GM12878 (cell line): ENCODE measurements at regions of chr12 and their contacts with region 1.

Region 1: GRCh38 chr12:40158592-40159111 is 52.8 kb upstream of the SLC2A13 start:
- DNase-seq: no peak
- ATAC-seq: peak; percentile 84
- H3K4me3 ChIP-seq: no peak overlapping the region
- H3K27ac ChIP-seq: peak overlapping the region; percentile 53; the same call in 1 of the 2 replicates
- H3K4me1 ChIP-seq: peaks cover 10% of the 10 kb centered on the region
- H3K27me3 ChIP-seq: no peaks in the 10 kb centered on the region
- CTCF ChIP-seq: no peak
- EP300 ChIP-seq: no peak
- POLR2A ChIP-seq: no peak
- RAD21 ChIP-seq: no peak

Region 2: DNA sequence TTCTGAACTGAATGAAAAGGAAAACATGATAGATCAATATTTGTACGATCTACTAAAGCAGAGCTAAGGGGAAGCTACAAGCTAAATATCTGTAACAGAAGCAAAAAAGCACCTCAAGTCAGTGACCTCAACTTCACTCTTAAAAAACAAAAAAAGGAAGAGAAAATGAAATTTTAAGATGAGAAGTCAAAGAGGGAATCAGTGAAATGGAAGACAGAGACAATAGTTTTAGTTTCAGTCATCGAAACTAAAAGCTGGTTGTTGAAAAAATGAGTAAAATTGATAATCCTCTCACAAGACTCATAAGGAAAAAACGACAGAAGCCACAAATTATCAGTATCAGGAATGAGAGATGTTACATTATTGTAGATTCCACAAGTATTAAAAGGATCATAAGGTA is 40.8 kb before region 1 on chr12:
- CTCF ChIA-PET with region 1: interaction called, 3 read pairs
- POLR2A ChIA-PET with region 1: interaction called, 3 read pairs
- RAD21 ChIA-PET with region 1: interaction called, 10 read pairs
- SMC1A ChIA-PET with region 1: interaction called, 6 read pairs
- in situ Hi-C with region 1: no loop called
- intact Hi-C with region 1: no loop called
- DNase-seq: peak; percentile 51
- ATAC-seq: peak; percentile 94
- H3K4me3 ChIP-seq: no peak overlapping the region
- H3K27ac ChIP-seq: no peak overlapping the region
- H3K4me1 ChIP-seq: peaks cover 3% of the 10 kb centered on the region; the same call in 1 of the 2 replicates
- H3K27me3 ChIP-seq: no peaks in the 10 kb centered on the region; a peak in 1 of 4 replicates
- CTCF ChIP-seq: no peak
- EP300 ChIP-seq: peak; percentile 44 to 59; a peak in 2 of 4 replicates
- POLR2A ChIP-seq: no peak
- RAD21 ChIP-seq: no peak

Region 3: DNA sequence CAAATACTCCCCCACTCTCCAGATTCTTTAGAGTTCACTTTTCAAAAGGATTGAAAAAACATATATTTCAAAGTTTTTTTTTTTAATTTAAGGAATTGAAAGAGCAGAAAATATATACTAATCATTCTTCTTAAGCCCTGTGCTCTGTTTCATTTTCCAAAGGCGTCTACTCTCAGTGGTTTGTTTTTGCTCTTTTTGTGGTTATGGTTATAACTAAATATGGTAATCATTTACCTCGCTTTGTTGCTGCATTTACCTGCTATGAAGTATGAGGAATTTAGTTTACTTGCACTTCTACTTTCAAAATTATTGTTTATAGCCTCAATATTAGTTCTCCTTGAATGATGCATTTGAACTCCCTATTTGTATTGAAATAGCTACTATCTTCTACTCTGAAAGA is 10.2 kb after region 1 on chr12:
- CTCF ChIA-PET with region 1: interaction called, 10 read pairs
- POLR2A ChIA-PET with region 1: no interaction called
- RAD21 ChIA-PET with region 1: interaction called, 13 read pairs
- SMC1A ChIA-PET with region 1: interaction called, 18 read pairs
- in situ Hi-C with region 1: no loop called
- intact Hi-C with region 1: no loop called
- DNase-seq: peak; percentile 55
- ATAC-seq: peak; percentile 94
- H3K4me3 ChIP-seq: 0 out of 2 replicates have a peak overlapping the region, but pooled peaks have one; percentile 9
- H3K27ac ChIP-seq: peak overlapping the region; percentile 56; the same call in 1 of the 2 replicates
- H3K4me1 ChIP-seq: peaks cover 10% of the 10 kb centered on the region
- H3K27me3 ChIP-seq: peaks cover 0 to 2% of the 10 kb centered on the region in 2 experiments; a peak in 1 of 4 replicates
- CTCF ChIP-seq: no peak
- EP300 ChIP-seq: peak; percentile 66 to 91
- POLR2A ChIP-seq: no peak
- RAD21 ChIP-seq: no peak

Region 4: GRCh38 chr12:40202095-40203059 is 43.7 kb after region 1 on chr12:
- CTCF ChIA-PET with region 1: interaction called, 3 read pairs
- POLR2A ChIA-PET with region 1: no interaction called
- RAD21 ChIA-PET with region 1: interaction called, 13 read pairs
- SMC1A ChIA-PET with region 1: interaction called, 42 read pairs
- in situ Hi-C with region 1: no loop called
- intact Hi-C with region 1: no loop called
- DNase-seq: no peak
- ATAC-seq: peak; percentile 79
- H3K4me3 ChIP-seq: no peak overlapping the region
- H3K27ac ChIP-seq: no peak overlapping the region
- H3K4me1 ChIP-seq: no peaks in the 10 kb centered on the region
- H3K27me3 ChIP-seq: no peaks in the 10 kb centered on the region
- CTCF ChIP-seq: no peak
- EP300 ChIP-seq: peak in 1 of 2 experiments; percentile 44; a peak in 1 of 4 replicates
- POLR2A ChIP-seq: no peak
- RAD21 ChIP-seq: no peak

Region 5: GRCh38 chr12:40208707-40209446 is 50.2 kb after region 1 on chr12:
- CTCF ChIA-PET with region 1: interaction called, 6 read pairs
- POLR2A ChIA-PET with region 1: interaction called, 8 read pairs
- RAD21 ChIA-PET with region 1: interaction called, 11 read pairs
- SMC1A ChIA-PET with region 1: interaction called, 42 read pairs
- in situ Hi-C with region 1: no loop called
- intact Hi-C with region 1: no loop called
- DNase-seq: no peak
- ATAC-seq: peak; percentile 94
- H3K4me3 ChIP-seq: no peak overlapping the region
- H3K27ac ChIP-seq: no peak overlapping the region
- H3K4me1 ChIP-seq: peaks cover 8% of the 10 kb centered on the region
- H3K27me3 ChIP-seq: no peaks in the 10 kb centered on the region
- CTCF ChIP-seq: no peak
- EP300 ChIP-seq: no peak
- POLR2A ChIP-seq: no peak
- RAD21 ChIP-seq: no peak

Region 6: DNA sequence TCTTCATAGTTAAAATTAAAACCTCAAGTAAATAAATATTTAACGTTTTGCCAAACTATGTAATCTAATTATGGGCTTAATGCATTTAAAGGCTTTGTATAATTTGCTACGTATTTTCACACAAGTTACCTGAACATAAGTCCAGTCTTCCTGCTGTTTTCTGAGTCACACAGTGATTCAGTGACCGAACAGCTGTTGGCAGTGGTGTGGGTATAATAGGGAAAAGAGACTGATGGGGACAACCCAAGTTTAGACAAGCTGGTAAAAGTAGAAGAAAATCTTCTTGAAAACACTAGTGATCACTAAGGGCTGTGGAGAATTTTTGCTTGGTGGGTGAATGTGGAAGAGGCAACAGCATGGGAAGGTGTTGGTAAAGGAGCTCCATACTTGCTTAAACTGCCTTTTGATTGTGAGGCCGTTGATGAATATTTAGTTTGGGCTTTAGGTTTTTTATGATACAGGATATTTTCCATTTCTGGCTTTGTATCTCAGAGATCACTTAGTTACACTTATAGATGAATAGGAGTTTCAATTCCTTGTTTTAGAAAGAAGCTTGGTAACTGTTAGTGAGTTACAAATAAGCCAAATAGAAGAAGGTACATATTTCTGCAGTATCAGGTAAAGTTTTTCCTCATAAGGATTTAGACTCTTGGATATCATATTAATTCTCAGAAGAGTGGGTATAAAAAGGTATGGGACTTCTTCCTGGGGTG is 90.1 kb after region 1 on chr12:
- CTCF ChIA-PET with region 1: interaction called, 3 read pairs
- POLR2A ChIA-PET with region 1: interaction called, 3 read pairs
- RAD21 ChIA-PET with region 1: interaction called, 10 read pairs
- SMC1A ChIA-PET with region 1: interaction called, 6 read pairs
- in situ Hi-C with region 1: no loop called
- intact Hi-C with region 1: no loop called
- DNase-seq: no peak
- ATAC-seq: peak; percentile 87
- H3K4me3 ChIP-seq: no peak overlapping the region
- H3K27ac ChIP-seq: no peak overlapping the region
- H3K4me1 ChIP-seq: peaks cover 6% of the 10 kb centered on the region; the same call in 1 of the 2 replicates
- H3K27me3 ChIP-seq: no peaks in the 10 kb centered on the region
- CTCF ChIP-seq: no peak
- EP300 ChIP-seq: no peak
- POLR2A ChIP-seq: no peak
- RAD21 ChIP-seq: no peak